MCF 10A (cell line): ENCODE measurements at regions of chrX and their contacts with region 1.

Region 1: GRCh38 chrX:19225924-19226323 is 103.7 kb upstream of the ADGRG2 start:
- DNase-seq: peak; percentile 33
- H3K4me3 Mint-ChIP-seq: no peak overlapping the region
- H3K27ac Mint-ChIP-seq: no peak overlapping the region
- H3K4me1 Mint-ChIP-seq: no peaks in the 10 kb centered on the region
- H3K27me3 Mint-ChIP-seq: no peaks in the 10 kb centered on the region
- CTCF ChIP-seq: peak; percentile 31

Region 2: GRCh38 chrX:19017271-19017670 is 208.7 kb before region 1 on chrX:
- CTCF ChIA-PET with region 1: interaction called, 5 read pairs
- POLR2A ChIA-PET with region 1: no interaction called
- intact Hi-C with region 1: loop called (anchors 1 kb)
- DNase-seq: peak; percentile 49
- H3K4me3 Mint-ChIP-seq: no peak overlapping the region
- H3K27ac Mint-ChIP-seq: no peak overlapping the region
- H3K4me1 Mint-ChIP-seq: no peaks in the 10 kb centered on the region
- H3K27me3 Mint-ChIP-seq: no peaks in the 10 kb centered on the region
- CTCF ChIP-seq: peak; percentile 4

Region 3: DNA sequence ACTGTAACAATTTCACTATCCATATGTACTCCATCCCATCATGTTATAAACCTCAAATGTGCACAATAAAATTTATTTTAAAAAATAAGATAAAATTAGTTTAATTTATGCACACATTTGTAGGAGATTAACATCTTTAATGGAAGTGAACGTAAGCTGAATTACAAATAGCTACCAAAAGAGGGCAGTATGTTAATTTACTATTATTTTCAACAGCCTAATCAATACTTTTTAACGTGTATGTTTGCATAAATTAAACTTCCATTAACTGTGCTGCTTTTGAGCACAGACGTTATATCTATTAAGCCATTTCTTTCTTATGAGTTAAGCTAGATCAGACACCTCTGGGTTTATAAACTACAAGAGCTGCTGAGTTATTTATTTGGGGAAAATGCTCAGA is 185.6 kb before region 1 on chrX:
- CTCF ChIA-PET with region 1: interaction called, 11 read pairs
- POLR2A ChIA-PET with region 1: no interaction called
- intact Hi-C with region 1: loop called (anchors 1 kb)
- DNase-seq: peak; percentile 9
- H3K4me3 Mint-ChIP-seq: no peak overlapping the region
- H3K27ac Mint-ChIP-seq: no peak overlapping the region
- H3K4me1 Mint-ChIP-seq: peaks cover under 1% of the 10 kb centered on the region
- H3K27me3 Mint-ChIP-seq: no peaks in the 10 kb centered on the region
- CTCF ChIP-seq: peak; percentile 23

Region 4: DNA sequence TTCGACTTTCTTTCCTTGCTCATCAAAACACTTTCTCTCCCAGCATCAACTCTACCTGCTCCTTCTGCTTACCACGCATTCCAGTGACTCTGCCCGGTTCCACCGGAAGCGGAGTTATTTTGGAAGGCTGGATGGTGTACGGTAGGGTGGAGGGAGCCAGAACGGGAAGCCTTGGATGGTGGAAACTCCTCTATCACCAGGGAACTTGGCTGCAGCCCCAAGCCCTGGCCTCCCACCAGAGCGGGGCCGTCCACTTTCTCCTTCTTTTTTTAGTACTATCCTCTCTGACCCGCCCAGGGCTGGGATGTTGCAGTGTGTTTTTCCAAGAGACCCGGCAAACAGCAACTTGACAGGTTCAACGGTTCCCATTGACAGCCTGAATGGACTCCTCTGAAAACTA is 131.3 kb before region 1 on chrX:
- CTCF ChIA-PET with region 1: interaction called, 3 read pairs
- POLR2A ChIA-PET with region 1: no interaction called
- intact Hi-C with region 1: loop called (anchors 5 kb)
- DNase-seq: no peak
- H3K4me3 Mint-ChIP-seq: no peak overlapping the region
- H3K27ac Mint-ChIP-seq: no peak overlapping the region
- H3K4me1 Mint-ChIP-seq: no peaks in the 10 kb centered on the region
- H3K27me3 Mint-ChIP-seq: no peaks in the 10 kb centered on the region
- CTCF ChIP-seq: no peak

Region 5: DNA sequence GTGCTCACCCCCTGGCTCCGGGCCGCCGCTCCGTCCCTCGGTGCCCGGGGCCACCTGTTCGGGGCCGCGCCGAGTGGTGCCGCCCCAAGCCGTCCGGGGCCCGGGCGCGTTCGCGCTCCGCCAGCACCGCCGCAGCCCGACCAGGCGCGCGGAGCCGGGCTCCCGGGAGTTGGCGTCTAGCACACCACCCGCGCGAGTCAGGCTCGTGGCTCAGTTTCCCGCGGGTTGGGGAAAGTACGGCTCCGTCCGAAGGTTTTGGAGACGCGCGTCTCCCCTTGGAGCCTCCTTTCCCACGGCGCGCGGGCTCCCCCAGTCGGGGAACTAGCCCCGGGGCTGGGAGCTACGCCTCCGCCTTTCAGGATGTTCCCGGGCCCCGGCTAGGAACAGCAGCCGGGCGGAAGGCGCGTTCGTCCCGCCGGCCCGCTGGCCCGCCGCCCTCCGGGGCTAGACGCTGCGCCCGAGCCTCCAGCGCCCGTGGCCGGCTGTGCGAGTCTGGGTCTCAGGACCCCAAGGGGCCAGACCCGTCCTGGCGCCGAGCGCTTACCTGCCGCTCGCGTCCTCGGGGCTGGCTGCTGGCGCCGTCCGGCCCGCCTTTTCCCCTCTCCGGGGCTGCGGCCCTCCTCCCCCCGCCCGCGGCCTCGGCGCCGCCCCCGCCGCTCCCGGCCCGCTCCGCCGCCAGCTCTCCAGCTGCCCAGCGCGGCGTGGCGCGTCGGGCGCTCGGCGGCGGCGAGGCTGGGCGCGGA is 103.9 kb before region 1 on chrX and contains the start of gene ADGRG2:
- CTCF ChIA-PET with region 1: no interaction called
- POLR2A ChIA-PET with region 1: no interaction called
- intact Hi-C with region 1: loop called (anchors 10 kb)
- DNase-seq: peak; percentile 30
- H3K4me3 Mint-ChIP-seq: peak within 1 kb of the TSS; percentile 61
- H3K27ac Mint-ChIP-seq: no peak within 1 kb of the TSS
- H3K4me1 Mint-ChIP-seq: no peaks in the 10 kb centered on the region
- H3K27me3 Mint-ChIP-seq: no peaks in the 10 kb centered on the region
- CTCF ChIP-seq: no peak
- total RNA-seq, gene ADGRG2: 6.4 and 8.6 TPM in 2 replicates

Region 6: DNA sequence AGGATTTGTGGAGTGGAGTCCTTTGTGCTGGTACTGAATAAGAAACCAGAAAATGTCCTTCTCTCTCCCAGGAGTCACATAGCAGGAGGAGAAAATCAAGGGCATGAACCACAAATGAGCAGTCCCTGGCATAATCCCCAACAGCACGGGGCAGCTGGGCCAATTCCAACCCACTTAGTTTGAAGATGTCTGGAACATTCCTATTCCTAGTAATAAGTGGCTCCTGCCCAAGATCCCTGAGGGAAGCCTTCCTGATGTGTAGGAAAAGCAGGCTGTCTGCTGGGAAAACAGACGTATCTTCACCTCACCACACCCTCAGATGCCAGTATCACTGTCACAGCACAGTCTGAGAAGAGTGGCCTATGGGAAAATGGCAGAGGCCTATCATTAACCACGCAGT is 472.2 kb after region 1 on chrX:
- CTCF ChIA-PET with region 1: no interaction called
- POLR2A ChIA-PET with region 1: no interaction called
- intact Hi-C with region 1: no loop called
- DNase-seq: peak; percentile 75
- H3K4me3 Mint-ChIP-seq: no peak overlapping the region
- H3K27ac Mint-ChIP-seq: no peak overlapping the region
- H3K4me1 Mint-ChIP-seq: peaks cover 11% of the 10 kb centered on the region
- H3K27me3 Mint-ChIP-seq: peaks cover 59% of the 10 kb centered on the region
- CTCF ChIP-seq: no peak